CD4-positive, alpha-beta T cell (primary cell): ENCODE measurements at regions of chr2 and their contacts with region 1.

Region 1: GRCh38 chr2:44981136-44982108 is 27.8 kb downstream of the SIX2 start:
- DNase-seq: peak; percentile 38 to 79 (median 54)
- ATAC-seq: no peak
- H3K4me3 ChIP-seq: no peak overlapping the region
- H3K4me3 Mint-ChIP-seq: no peak overlapping the region
- H3K27ac ChIP-seq: no peak overlapping the region
- H3K27ac Mint-ChIP-seq: no peak overlapping the region
- H3K4me1 ChIP-seq: no peaks in the 10 kb centered on the region
- H3K4me1 Mint-ChIP-seq: no peaks in the 10 kb centered on the region
- H3K27me3 ChIP-seq: peaks cover 11 to 13% of the 10 kb centered on the region in 2 experiments
- H3K27me3 Mint-ChIP-seq: peaks cover 54% of the 10 kb centered on the region
- CTCF ChIP-seq: peak; percentile 89

Region 2: DNA sequence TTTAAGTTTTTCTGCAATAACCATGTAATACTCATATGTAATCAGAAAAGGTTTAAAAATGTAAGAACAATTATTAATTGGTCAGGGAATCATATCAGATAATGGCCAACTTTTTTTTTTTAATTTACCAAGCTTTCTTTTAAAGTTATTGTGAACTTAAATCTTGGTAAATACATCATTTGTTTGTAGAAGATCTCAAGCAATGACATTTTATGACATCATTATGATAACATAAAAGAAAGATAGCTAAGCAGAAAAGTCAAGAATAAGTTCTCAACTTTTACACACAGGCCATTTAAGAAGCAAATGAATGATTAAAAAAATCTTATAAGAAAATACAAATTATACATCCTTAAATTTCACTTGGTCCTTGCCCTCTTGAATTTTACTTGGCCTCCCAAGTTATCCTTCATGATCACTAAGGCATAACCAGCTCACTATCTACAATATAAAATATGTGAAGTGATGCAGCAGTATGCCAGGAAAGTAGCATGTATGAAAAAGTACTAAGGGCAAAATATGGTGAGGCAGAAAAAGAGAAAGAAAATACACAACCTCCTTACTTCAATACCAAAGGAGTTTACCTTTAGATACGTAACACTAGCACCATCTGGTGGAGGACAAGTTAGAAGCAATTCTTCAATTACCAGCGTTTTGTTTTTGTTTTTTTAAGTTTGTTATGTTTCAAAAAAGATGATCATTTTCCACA is 513.0 kb after region 1 on chr2:
- CTCF ChIA-PET with region 1: interaction called, 19 read pairs
- POLR2A ChIA-PET with region 1: no interaction called
- intact Hi-C with region 1: loop called (anchors 1 kb)
- DNase-seq: peak in 3 of 14 experiments; percentile 50 to 64 (median 59)
- ATAC-seq: no peak
- H3K4me3 ChIP-seq: no peak overlapping the region
- H3K4me3 Mint-ChIP-seq: no peak overlapping the region
- H3K27ac ChIP-seq: no peak overlapping the region
- H3K27ac Mint-ChIP-seq: no peak overlapping the region
- H3K4me1 ChIP-seq: no peaks in the 10 kb centered on the region
- H3K4me1 Mint-ChIP-seq: peaks cover 6% of the 10 kb centered on the region
- H3K27me3 ChIP-seq: no peaks in the 10 kb centered on the region
- H3K27me3 Mint-ChIP-seq: no peaks in the 10 kb centered on the region
- CTCF ChIP-seq: peak; percentile 78

Region 3: GRCh38 chr2:45578056-45578809 is 596.8 kb after region 1 on chr2:
- CTCF ChIA-PET with region 1: interaction called, 5 read pairs
- POLR2A ChIA-PET with region 1: no interaction called
- intact Hi-C with region 1: loop called in 1 of 2 experiments (anchors 1 kb)
- DNase-seq: peak in 9 of 14 experiments; percentile 3 to 70 (median 15)
- ATAC-seq: peak; percentile 86
- H3K4me3 ChIP-seq: no peak overlapping the region
- H3K4me3 Mint-ChIP-seq: no peak overlapping the region
- H3K27ac ChIP-seq: no peak overlapping the region
- H3K27ac Mint-ChIP-seq: no peak overlapping the region
- H3K4me1 ChIP-seq: no peaks in the 10 kb centered on the region
- H3K4me1 Mint-ChIP-seq: no peaks in the 10 kb centered on the region
- H3K27me3 ChIP-seq: no peaks in the 10 kb centered on the region
- H3K27me3 Mint-ChIP-seq: no peaks in the 10 kb centered on the region
- CTCF ChIP-seq: peak; percentile 39

Region 4: GRCh38 chr2:45778720-45779171 is 797.3 kb after region 1 on chr2:
- CTCF ChIA-PET with region 1: no interaction called
- POLR2A ChIA-PET with region 1: no interaction called
- intact Hi-C with region 1: loop called (anchors 2 to 5 kb)
- DNase-seq: peak; percentile 43 to 87 (median 64)
- ATAC-seq: peak; percentile 90
- H3K4me3 ChIP-seq: no peak overlapping the region
- H3K4me3 Mint-ChIP-seq: peak overlapping the region; percentile 27
- H3K27ac ChIP-seq: no peak overlapping the region
- H3K27ac Mint-ChIP-seq: no peak overlapping the region
- H3K4me1 ChIP-seq: peaks cover 5% of the 10 kb centered on the region
- H3K4me1 Mint-ChIP-seq: peaks cover 6% of the 10 kb centered on the region
- H3K27me3 ChIP-seq: no peaks in the 10 kb centered on the region
- H3K27me3 Mint-ChIP-seq: no peaks in the 10 kb centered on the region
- CTCF ChIP-seq: peak; percentile 89